ENCODE measurements at regions of chr14 and their contacts with region 1.

Region 1: GRCh38 chr14:101964297-101965144 is at the start of gene DYNC1H1:
- DNase-seq: peak; percentile 94
- ATAC-seq: peak; percentile 90
- H3K4me3 ChIP-seq: peak within 1 kb of the TSS; percentile 46 to 97 (median 93)
- H3K4me3 Mint-ChIP-seq: peak within 1 kb of the TSS; percentile 96
- H3K27ac ChIP-seq: peak within 1 kb of the TSS; percentile 72 to 82
- H3K27ac Mint-ChIP-seq: peak within 1 kb of the TSS; percentile 94
- H3K4me1 ChIP-seq: peaks cover 12 to 22% of the 10 kb centered on the region in 2 donors
- H3K4me1 Mint-ChIP-seq: peaks cover 42% of the 10 kb centered on the region
- H3K27me3 ChIP-seq: no peaks in the 10 kb centered on the region
- H3K27me3 Mint-ChIP-seq: no peaks in the 10 kb centered on the region
- CTCF ChIP-seq: no peak
- total RNA-seq, gene DYNC1H1: 257 TPM in 2 replicates

Region 2: DNA sequence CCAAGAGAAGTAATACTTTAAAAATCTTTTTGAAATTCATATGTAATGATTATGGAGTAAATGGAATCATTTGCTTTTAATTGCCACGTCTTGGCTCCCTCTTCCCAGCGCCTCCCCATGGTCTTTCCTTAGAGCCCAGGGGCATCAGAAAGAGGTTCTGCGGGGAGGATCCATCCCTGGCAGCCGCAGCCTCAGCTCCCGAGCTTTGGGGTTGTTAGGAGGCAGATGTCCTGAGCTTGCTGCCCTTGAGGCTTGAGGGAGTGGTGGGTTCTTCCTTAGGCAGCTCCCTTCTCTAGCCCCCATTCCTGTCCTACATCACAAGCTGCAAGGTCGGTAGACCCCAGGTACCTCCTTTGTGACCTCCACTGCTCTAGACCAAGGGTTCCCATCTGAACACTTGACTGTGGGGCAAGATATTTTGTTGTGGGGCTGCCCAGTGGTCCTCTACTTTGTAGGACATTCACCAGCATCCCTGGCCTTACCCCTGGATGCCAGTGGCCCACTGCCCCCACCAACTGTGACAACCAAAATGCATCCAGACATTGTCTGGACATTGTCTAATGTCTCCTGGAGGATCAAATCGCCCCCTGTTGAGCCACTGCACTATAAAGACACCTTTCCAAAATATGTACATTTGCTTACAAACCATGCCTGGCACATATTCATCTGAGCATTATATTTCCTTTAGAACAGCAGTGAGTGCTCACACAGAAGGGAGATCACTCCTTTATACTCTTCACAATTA is 196.7 kb before region 1 on chr14:
- CTCF ChIA-PET with region 1: interaction called, 14 read pairs
- POLR2A ChIA-PET with region 1: no interaction called
- intact Hi-C with region 1: no loop called
- DNase-seq: no peak
- ATAC-seq: no peak
- H3K4me3 ChIP-seq: no peak overlapping the region
- H3K4me3 Mint-ChIP-seq: no peak overlapping the region
- H3K27ac ChIP-seq: no peak overlapping the region
- H3K27ac Mint-ChIP-seq: no peak overlapping the region
- H3K4me1 ChIP-seq: peaks cover under 1 to 8% of the 10 kb centered on the region in 2 donors
- H3K4me1 Mint-ChIP-seq: peaks cover 12% of the 10 kb centered on the region
- H3K27me3 ChIP-seq: no peaks in the 10 kb centered on the region
- H3K27me3 Mint-ChIP-seq: no peaks in the 10 kb centered on the region
- CTCF ChIP-seq: no peak

Region 3: DNA sequence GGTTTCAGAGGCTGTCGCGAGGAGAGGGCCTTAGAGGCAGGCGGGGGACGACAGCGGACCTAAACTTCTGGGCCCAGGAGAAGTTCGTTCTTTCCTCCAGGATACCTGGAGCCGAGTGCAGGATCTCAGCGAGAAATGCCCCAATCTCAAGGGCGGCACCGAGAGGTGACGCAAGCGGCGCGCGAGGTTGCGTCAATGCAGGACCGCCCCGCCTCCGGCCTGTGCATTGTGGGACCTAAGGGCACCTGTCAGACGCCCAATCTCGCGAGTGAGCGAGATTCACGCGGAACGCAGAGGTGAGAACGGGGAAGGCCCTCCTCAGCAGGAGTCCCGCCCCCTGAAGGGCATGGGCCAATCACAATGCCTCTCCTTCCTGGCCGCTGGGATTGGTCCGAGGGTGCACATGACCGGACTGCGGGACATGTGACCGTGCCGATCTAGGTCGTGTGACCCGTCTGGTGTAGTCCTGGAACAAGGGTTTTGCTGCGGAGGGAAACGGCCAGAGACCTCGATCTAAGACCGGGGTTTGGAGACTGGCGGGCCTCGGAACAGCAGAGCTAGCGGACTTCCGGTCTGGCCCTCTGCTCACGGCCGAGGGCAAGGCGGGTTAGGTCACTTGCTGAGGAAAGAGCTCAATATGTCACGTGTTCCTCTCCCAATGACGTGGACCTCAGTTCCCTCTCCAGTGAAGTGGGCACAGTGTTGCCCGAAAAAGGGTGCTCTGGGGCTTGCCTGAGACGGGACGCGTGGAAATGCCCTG is 16.4 kb before region 1 on chr14:
- CTCF ChIA-PET with region 1: interaction called, 14 read pairs
- POLR2A ChIA-PET with region 1: interaction called, 6 read pairs
- intact Hi-C with region 1: loop called (anchors 1 kb)
- DNase-seq: peak; percentile 100
- ATAC-seq: peak; percentile 96
- H3K4me3 ChIP-seq: peak overlapping the region; percentile 80 to 99 (median 91)
- H3K4me3 Mint-ChIP-seq: peak overlapping the region; percentile 97
- H3K27ac ChIP-seq: peak overlapping the region; percentile 97 to 99
- H3K27ac Mint-ChIP-seq: peak overlapping the region; percentile 99
- H3K4me1 ChIP-seq: peaks cover 10 to 18% of the 10 kb centered on the region in 2 donors
- H3K4me1 Mint-ChIP-seq: peaks cover 23% of the 10 kb centered on the region
- H3K27me3 ChIP-seq: peaks cover 0 to 13% (median 2%) of the 10 kb centered on the region in 4 experiments
- H3K27me3 Mint-ChIP-seq: peaks cover 25% of the 10 kb centered on the region
- CTCF ChIP-seq: no peak

Region 4: GRCh38 chr14:102086972-102087761 is 122.6 kb after region 1 on chr14 and contains the start of gene HSP90AA1:
- CTCF ChIA-PET with region 1: no interaction called
- POLR2A ChIA-PET with region 1: no interaction called
- intact Hi-C with region 1: loop called (anchors 1 kb)
- DNase-seq: peak; percentile 97
- ATAC-seq: peak; percentile 70
- H3K4me3 ChIP-seq: peak within 1 kb of the TSS; percentile 79 to 91 (median 84)
- H3K4me3 Mint-ChIP-seq: peak within 1 kb of the TSS; percentile 95
- H3K27ac ChIP-seq: peak within 1 kb of the TSS; percentile 96 to 98
- H3K27ac Mint-ChIP-seq: peak within 1 kb of the TSS; percentile 96
- H3K4me1 ChIP-seq: peaks cover 18 to 28% of the 10 kb centered on the region in 2 donors
- H3K4me1 Mint-ChIP-seq: peaks cover 55% of the 10 kb centered on the region
- H3K27me3 ChIP-seq: no peaks in the 10 kb centered on the region
- H3K27me3 Mint-ChIP-seq: no peaks in the 10 kb centered on the region
- CTCF ChIP-seq: no peak
- total RNA-seq, gene HSP90AA1: 222 and 225 TPM in 2 replicates

Region 5: GRCh38 chr14:102362545-102363181 is 398.1 kb after region 1 on chr14 and contains the starts of genes CINP and TECPR2:
- CTCF ChIA-PET with region 1: no interaction called
- POLR2A ChIA-PET with region 1: no interaction called
- intact Hi-C with region 1: loop called (anchors 1 kb)
- DNase-seq: peak; percentile 95
- ATAC-seq: peak; percentile 97
- H3K4me3 ChIP-seq: peak within 1 kb of the TSS; percentile 55 to 90 (median 82)
- H3K4me3 Mint-ChIP-seq: no peak within 1 kb of the TSS
- H3K27ac ChIP-seq: peak within 1 kb of the TSS; percentile 61 to 93
- H3K27ac Mint-ChIP-seq: peak within 1 kb of the TSS; percentile 92
- H3K4me1 ChIP-seq: peaks cover 16 to 18% of the 10 kb centered on the region in 2 donors
- H3K4me1 Mint-ChIP-seq: peaks cover 25% of the 10 kb centered on the region
- H3K27me3 ChIP-seq: no peaks in the 10 kb centered on the region
- H3K27me3 Mint-ChIP-seq: no peaks in the 10 kb centered on the region
- CTCF ChIP-seq: no peak
- total RNA-seq, gene CINP: 23.7 and 28.8 TPM in 2 replicates
- total RNA-seq, gene TECPR2: 10.8 and 11.2 TPM in 2 replicates

Measured in B cell (primary cell).